B cell (primary cell): ENCODE measurements at regions of chr1 and their contacts with region 1.

Region 1: GRCh38 chr1:202160377-202160940 is at the start of gene PTPN7:
- DNase-seq: peak; percentile 82
- ATAC-seq: peak; percentile 56
- H3K4me3 ChIP-seq: peak within 1 kb of the TSS; percentile 69 to 92 (median 73)
- H3K4me3 Mint-ChIP-seq: peak within 1 kb of the TSS; percentile 93
- H3K27ac ChIP-seq: peak within 1 kb of the TSS; percentile 89 to 93
- H3K27ac Mint-ChIP-seq: peak within 1 kb of the TSS; percentile 94
- H3K4me1 ChIP-seq: peaks cover 66 to 77% of the 10 kb centered on the region in 2 donors
- H3K4me1 Mint-ChIP-seq: peaks cover 83% of the 10 kb centered on the region
- H3K27me3 ChIP-seq: no peaks in the 10 kb centered on the region
- H3K27me3 Mint-ChIP-seq: no peaks in the 10 kb centered on the region
- CTCF ChIP-seq: peak; percentile 69
- total RNA-seq, gene PTPN7: 16.0 and 16.5 TPM in 2 replicates

Region 2: DNA sequence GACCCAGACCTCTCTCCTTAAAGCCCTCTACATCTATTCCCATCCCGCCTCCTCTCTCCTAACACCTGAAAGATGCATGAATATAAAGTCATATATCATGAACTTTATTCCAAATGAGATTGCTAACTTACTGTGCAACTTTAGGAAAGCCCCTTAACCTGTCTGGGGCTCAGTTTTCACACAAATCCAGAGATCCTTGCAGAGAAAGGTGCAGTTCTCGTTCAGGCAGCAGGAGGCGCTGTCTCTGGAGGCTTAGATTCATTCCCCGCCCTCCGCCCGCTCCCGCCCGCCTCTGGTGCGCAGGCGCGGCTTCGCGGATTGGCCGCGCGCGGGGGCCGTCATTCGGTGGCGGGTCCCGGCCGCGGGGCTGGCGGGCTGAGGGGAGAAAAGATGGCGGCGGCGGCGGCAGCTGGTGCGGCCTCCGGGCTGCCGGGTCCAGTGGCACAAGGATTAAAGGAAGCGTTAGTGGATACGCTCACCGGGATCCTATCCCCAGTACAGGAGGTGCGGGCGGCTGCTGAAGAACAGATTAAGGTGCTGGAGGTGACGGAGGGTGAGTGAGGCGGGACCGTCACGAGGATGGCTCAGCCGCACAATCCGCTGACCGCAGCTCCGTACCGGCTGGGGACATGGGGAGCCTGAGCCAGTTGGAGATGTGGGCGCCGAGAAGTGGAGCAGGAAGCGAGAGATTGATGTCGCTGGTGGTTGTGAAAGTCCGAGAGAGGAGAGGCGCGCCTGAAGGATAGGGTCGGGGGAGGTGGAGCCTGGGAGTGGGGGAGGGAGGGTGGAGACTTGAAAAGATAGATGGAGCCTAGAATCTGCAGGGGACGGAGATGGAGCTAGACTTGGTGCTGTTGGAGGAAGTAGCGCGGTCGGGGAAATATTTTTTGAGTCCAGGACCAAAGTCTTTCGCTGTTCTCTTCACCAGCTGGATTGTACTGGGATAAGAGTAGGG is 331.4 kb before region 1 on chr1 and contains the start of gene IPO9:
- CTCF ChIA-PET with region 1: no interaction called
- POLR2A ChIA-PET with region 1: no interaction called
- intact Hi-C with region 1: loop called (anchors 5 kb)
- DNase-seq: peak; percentile 96
- ATAC-seq: peak; percentile 95
- H3K4me3 ChIP-seq: peak within 1 kb of the TSS; percentile 72 to 100 (median 96)
- H3K4me3 Mint-ChIP-seq: peak within 1 kb of the TSS; percentile 95
- H3K27ac ChIP-seq: peak within 1 kb of the TSS; percentile 84 to 95
- H3K27ac Mint-ChIP-seq: peak within 1 kb of the TSS; percentile 93
- H3K4me1 ChIP-seq: peaks cover 12 to 19% of the 10 kb centered on the region in 2 donors
- H3K4me1 Mint-ChIP-seq: peaks cover 43% of the 10 kb centered on the region
- H3K27me3 ChIP-seq: no peaks in the 10 kb centered on the region
- H3K27me3 Mint-ChIP-seq: no peaks in the 10 kb centered on the region
- CTCF ChIP-seq: peak; percentile 99
- total RNA-seq, gene IPO9: 56.9 and 57.0 TPM in 2 replicates

Region 3: DNA sequence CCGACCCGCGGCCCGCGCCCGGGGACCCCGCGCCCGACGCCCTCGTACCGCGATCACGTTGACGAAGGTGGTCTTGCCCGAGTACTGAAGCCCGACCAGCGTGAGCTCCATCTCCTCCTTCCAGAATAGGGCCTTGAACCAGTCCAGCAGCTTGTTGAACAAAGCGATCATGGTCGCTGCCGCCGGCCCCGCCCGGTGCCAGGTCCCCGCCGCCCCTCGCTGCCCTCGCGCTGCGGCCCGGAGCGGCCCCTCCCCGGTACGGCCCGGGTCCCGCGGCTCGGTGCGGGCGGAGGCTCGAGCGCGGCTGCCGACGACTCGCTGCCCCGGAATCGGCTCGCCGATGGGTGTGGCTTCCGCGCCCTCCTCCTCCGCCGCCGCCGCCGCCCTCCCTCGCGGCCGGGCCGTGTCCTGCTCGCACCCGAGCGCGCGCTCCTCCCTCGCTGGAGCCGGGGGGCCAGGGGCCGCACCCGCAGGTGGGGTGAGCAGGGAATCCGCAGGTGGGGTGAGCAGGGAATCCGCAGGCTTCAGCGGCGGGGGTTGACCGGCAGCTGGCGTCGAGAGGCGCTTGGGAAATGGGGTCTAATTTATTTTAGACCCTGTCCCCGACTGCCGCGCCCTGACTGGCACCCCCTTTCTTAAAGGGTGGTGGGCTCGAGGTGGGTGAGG is 15.9 kb before region 1 on chr1 and contains the start of gene ARL8A:
- CTCF ChIA-PET with region 1: interaction called, 23 read pairs
- POLR2A ChIA-PET with region 1: interaction called, 4 read pairs
- intact Hi-C with region 1: loop called (anchors 1 kb)
- DNase-seq: peak; percentile 78
- ATAC-seq: peak; percentile 74
- H3K4me3 ChIP-seq: peak within 1 kb of the TSS; percentile 74 to 92 (median 88)
- H3K4me3 Mint-ChIP-seq: peak within 1 kb of the TSS; percentile 93
- H3K27ac ChIP-seq: peak within 1 kb of the TSS; percentile 65 to 90
- H3K27ac Mint-ChIP-seq: peak within 1 kb of the TSS; percentile 95
- H3K4me1 ChIP-seq: peaks cover 30 to 43% of the 10 kb centered on the region in 2 donors
- H3K4me1 Mint-ChIP-seq: peaks cover 47% of the 10 kb centered on the region
- H3K27me3 ChIP-seq: no peaks in the 10 kb centered on the region
- H3K27me3 Mint-ChIP-seq: no peaks in the 10 kb centered on the region
- CTCF ChIP-seq: no peak
- total RNA-seq, gene ARL8A: 66.8 and 70.7 TPM in 2 replicates

Region 4: DNA sequence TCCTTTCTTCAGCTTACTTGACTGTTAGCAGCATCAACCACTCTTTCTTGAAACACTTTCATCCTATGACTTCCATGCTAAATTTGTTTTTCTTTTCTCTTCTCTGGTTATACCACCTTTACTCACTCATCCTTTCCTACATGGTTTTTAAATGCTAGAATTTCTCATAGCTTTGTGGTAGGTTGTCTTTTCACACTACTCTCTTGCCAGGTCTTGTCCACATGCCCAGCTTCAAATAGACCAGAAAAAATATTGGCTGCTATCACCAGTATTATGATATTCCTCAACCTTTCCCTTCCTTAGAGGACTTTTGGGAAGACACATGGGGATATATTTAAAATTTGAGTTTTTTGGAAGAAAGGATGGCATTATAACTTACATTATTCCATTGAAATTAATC is 236.8 kb after region 1 on chr1:
- CTCF ChIA-PET with region 1: no interaction called
- POLR2A ChIA-PET with region 1: no interaction called
- intact Hi-C with region 1: no loop called
- DNase-seq: no peak
- ATAC-seq: no peak
- H3K4me3 ChIP-seq: no peak overlapping the region
- H3K4me3 Mint-ChIP-seq: no peak overlapping the region
- H3K27ac ChIP-seq: no peak overlapping the region
- H3K27ac Mint-ChIP-seq: no peak overlapping the region
- H3K4me1 ChIP-seq: no peaks in the 10 kb centered on the region
- H3K4me1 Mint-ChIP-seq: peaks cover 3% of the 10 kb centered on the region
- H3K27me3 ChIP-seq: no peaks in the 10 kb centered on the region
- H3K27me3 Mint-ChIP-seq: no peaks in the 10 kb centered on the region
- CTCF ChIP-seq: no peak

Region 5: DNA sequence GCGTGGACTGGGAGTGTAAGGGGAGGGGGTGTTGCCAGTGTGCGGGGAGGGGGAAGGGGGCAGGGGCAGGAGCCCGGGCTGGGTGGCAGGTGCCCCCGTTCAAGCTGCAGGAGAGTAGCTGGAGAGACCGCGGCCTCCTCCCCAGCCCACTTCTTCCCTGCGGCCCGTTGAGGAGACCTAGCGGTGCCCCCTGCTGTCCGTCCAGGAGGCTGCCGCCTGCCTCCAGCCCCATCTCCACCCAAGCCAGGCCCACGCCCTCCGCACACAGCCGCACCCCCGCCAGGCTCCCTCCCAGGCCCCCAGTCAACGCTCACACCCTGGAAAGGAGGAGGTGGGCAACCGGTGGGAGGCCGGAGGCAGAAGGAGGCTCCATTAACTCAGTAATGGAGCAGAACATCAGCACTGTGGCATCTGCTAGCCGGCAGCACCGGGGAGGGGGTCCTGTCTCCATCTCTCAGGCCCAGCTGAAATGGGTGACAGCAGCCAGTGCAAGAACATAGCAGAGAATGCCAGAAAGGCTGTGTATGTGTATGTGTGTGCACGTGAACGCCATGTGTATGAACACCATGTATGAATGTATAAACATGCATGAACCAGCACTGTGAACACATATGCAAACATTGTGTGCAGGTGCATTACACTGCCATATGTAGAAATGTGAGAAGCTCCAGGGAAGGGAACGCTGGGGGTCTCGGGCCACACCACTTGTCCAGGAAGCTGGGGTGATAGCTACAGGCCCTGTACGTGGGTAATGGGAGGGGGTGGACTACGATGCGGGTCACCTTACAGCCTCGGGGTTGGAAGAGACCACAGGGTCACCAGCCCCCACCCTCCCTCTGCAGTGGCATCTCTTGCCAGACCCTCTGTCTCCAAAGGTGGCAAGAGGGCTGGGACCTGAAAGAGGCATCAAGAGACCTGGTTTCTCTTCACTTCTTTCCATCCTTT is 465.2 kb after region 1 on chr1:
- CTCF ChIA-PET with region 1: no interaction called
- POLR2A ChIA-PET with region 1: no interaction called
- intact Hi-C with region 1: loop called (anchors 5 kb)
- DNase-seq: peak; percentile 70
- ATAC-seq: peak; percentile 61
- H3K4me3 ChIP-seq: no peak overlapping the region
- H3K4me3 Mint-ChIP-seq: no peak overlapping the region
- H3K27ac ChIP-seq: no peak overlapping the region
- H3K27ac Mint-ChIP-seq: no peak overlapping the region
- H3K4me1 ChIP-seq: peaks cover 60 to 64% of the 10 kb centered on the region in 2 donors
- H3K4me1 Mint-ChIP-seq: peaks cover 42% of the 10 kb centered on the region
- H3K27me3 ChIP-seq: peaks cover 0 to 31% (median 0%) of the 10 kb centered on the region in 4 experiments
- H3K27me3 Mint-ChIP-seq: peaks cover 21% of the 10 kb centered on the region
- CTCF ChIP-seq: peak; percentile 67